CD8-positive, alpha-beta T cell (primary cell): ENCODE measurements at regions of chr2 and their contacts with region 1.

Region 1: GRCh38 chr2:161063157-161063954 is 96.9 kb upstream of the TANK start:
- DNase-seq: peak; percentile 26 to 76 (median 59)
- ATAC-seq: peak; percentile 96
- H3K4me3 ChIP-seq: no peak overlapping the region
- H3K4me3 Mint-ChIP-seq: no peak overlapping the region
- H3K27ac ChIP-seq: no peak overlapping the region
- H3K27ac Mint-ChIP-seq: no peak overlapping the region
- H3K4me1 ChIP-seq: no peaks in the 10 kb centered on the region
- H3K4me1 Mint-ChIP-seq: peaks cover 4% of the 10 kb centered on the region
- H3K27me3 ChIP-seq: no peaks in the 10 kb centered on the region
- H3K27me3 Mint-ChIP-seq: no peaks in the 10 kb centered on the region
- CTCF ChIP-seq: peak; percentile 93

Region 2: DNA sequence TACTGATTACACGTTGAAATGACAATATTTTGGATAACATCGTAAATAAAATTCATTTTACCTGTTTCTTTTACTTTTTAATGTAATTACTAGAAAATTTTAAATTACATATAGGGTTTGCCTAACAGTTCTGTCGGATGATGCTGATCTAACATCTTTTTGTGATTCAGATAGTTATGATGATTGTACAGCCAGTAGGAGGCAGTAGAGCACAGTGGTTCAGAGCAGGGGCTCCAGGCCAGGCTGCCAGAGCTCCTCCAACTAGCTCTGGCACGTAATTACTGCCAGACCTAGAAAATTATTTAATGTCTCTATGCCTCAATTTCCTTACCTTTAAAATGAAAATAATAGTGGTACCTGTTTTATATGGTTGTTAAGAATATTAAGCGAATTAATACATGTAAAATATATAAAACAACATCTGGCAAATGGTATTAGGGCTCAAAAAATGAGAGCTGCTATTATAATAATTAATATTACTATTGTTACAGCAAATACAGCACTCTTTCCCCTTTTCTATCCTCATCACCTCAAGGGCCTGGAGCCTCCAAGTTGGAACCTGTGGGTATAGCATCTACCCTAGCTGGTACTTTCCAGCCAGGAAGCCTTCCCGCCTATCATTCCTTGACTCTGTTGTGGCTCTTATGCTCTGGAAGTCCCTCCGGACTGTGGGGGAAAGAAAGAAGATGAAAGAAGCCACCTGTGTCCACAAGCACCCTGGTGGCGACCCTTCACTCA is 953.3 kb before region 1 on chr2:
- CTCF ChIA-PET with region 1: interaction called, 4 read pairs
- POLR2A ChIA-PET with region 1: no interaction called
- intact Hi-C with region 1: loop called (anchors 2 kb)
- DNase-seq: peak in 8 of 9 experiments; percentile 9 to 72 (median 46)
- ATAC-seq: peak; percentile 64
- H3K4me3 ChIP-seq: no peak overlapping the region
- H3K4me3 Mint-ChIP-seq: no peak overlapping the region
- H3K27ac ChIP-seq: no peak overlapping the region
- H3K27ac Mint-ChIP-seq: no peak overlapping the region
- H3K4me1 ChIP-seq: no peaks in the 10 kb centered on the region
- H3K4me1 Mint-ChIP-seq: no peaks in the 10 kb centered on the region
- H3K27me3 ChIP-seq: no peaks in the 10 kb centered on the region
- H3K27me3 Mint-ChIP-seq: peaks cover 12% of the 10 kb centered on the region
- CTCF ChIP-seq: peak; percentile 86

Region 3: GRCh38 chr2:160324161-160324800 is 739.1 kb before region 1 on chr2:
- CTCF ChIA-PET with region 1: no interaction called
- POLR2A ChIA-PET with region 1: no interaction called
- intact Hi-C with region 1: loop called in 1 of 2 experiments (anchors 2 kb)
- DNase-seq: peak; percentile 14 to 61 (median 45)
- ATAC-seq: no peak
- H3K4me3 ChIP-seq: no peak overlapping the region
- H3K4me3 Mint-ChIP-seq: no peak overlapping the region
- H3K27ac ChIP-seq: no peak overlapping the region
- H3K27ac Mint-ChIP-seq: no peak overlapping the region
- H3K4me1 ChIP-seq: peaks cover 53% of the 10 kb centered on the region
- H3K4me1 Mint-ChIP-seq: peaks cover 86% of the 10 kb centered on the region
- H3K27me3 ChIP-seq: no peaks in the 10 kb centered on the region
- H3K27me3 Mint-ChIP-seq: no peaks in the 10 kb centered on the region
- CTCF ChIP-seq: peak; percentile 54

Region 4: GRCh38 chr2:160584972-160585494 is 478.3 kb before region 1 on chr2:
- CTCF ChIA-PET with region 1: no interaction called
- POLR2A ChIA-PET with region 1: no interaction called
- intact Hi-C with region 1: loop called in 1 of 2 experiments (anchors 5 kb)
- DNase-seq: no peak
- ATAC-seq: no peak
- H3K4me3 ChIP-seq: no peak overlapping the region
- H3K4me3 Mint-ChIP-seq: no peak overlapping the region
- H3K27ac ChIP-seq: no peak overlapping the region
- H3K27ac Mint-ChIP-seq: no peak overlapping the region
- H3K4me1 ChIP-seq: peaks cover 4% of the 10 kb centered on the region
- H3K4me1 Mint-ChIP-seq: peaks cover 3% of the 10 kb centered on the region
- H3K27me3 ChIP-seq: no peaks in the 10 kb centered on the region
- H3K27me3 Mint-ChIP-seq: no peaks in the 10 kb centered on the region
- CTCF ChIP-seq: no peak

Region 5: GRCh38 chr2:161077367-161078210 is 14.2 kb after region 1 on chr2:
- CTCF ChIA-PET with region 1: interaction called, 16 read pairs
- POLR2A ChIA-PET with region 1: interaction called, 3 read pairs
- intact Hi-C with region 1: no loop called
- DNase-seq: peak; percentile 11 to 86 (median 53)
- ATAC-seq: peak; percentile 88
- H3K4me3 ChIP-seq: no peak overlapping the region
- H3K4me3 Mint-ChIP-seq: peak overlapping the region; percentile 30
- H3K27ac ChIP-seq: peak overlapping the region; percentile 5 to 43
- H3K27ac Mint-ChIP-seq: peak overlapping the region; percentile 82
- H3K4me1 ChIP-seq: peaks cover 23% of the 10 kb centered on the region
- H3K4me1 Mint-ChIP-seq: peaks cover 28% of the 10 kb centered on the region
- H3K27me3 ChIP-seq: no peaks in the 10 kb centered on the region
- H3K27me3 Mint-ChIP-seq: no peaks in the 10 kb centered on the region
- CTCF ChIP-seq: no peak

Region 6: GRCh38 chr2:161273038-161273760 is 209.8 kb after region 1 on chr2:
- CTCF ChIA-PET with region 1: interaction called, 4 read pairs
- POLR2A ChIA-PET with region 1: no interaction called
- intact Hi-C with region 1: loop called (anchors 1 to 10 kb)
- DNase-seq: peak in 3 of 9 experiments; percentile 51 to 77 (median 72)
- ATAC-seq: peak; percentile 69
- H3K4me3 ChIP-seq: no peak overlapping the region
- H3K4me3 Mint-ChIP-seq: no peak overlapping the region
- H3K27ac ChIP-seq: no peak overlapping the region
- H3K27ac Mint-ChIP-seq: no peak overlapping the region
- H3K4me1 ChIP-seq: no peaks in the 10 kb centered on the region
- H3K4me1 Mint-ChIP-seq: no peaks in the 10 kb centered on the region
- H3K27me3 ChIP-seq: peaks cover 0 to 2% of the 10 kb centered on the region in 2 experiments
- H3K27me3 Mint-ChIP-seq: peaks cover 7% of the 10 kb centered on the region
- CTCF ChIP-seq: peak; percentile 90